Esophagus muscularis mucosa (tissue), 4 donors: ENCODE measurements at regions of chr9 and their contacts with region 1.

Region 1: GRCh38 chr9:6584881-6585597 is 60.5 kb downstream of the GLDC start:
- DNase-seq: no peak
- H3K4me3 ChIP-seq: no peak overlapping the region
- H3K27ac ChIP-seq: no peak overlapping the region
- H3K4me1 ChIP-seq: no peaks in the 10 kb centered on the region
- H3K27me3 ChIP-seq: peaks cover 0 to 8% (median 0%) of the 10 kb centered on the region in 4 donors
- CTCF ChIP-seq: peak; percentile 29 to 53 (median 43)
- EP300 ChIP-seq: no peak
- POLR2A ChIP-seq: no peak

Region 2: GRCh38 chr9:6667633-6668280 is 82.7 kb after region 1 on chr9:
- intact Hi-C with region 1: loop called (anchors 10 kb)
- DNase-seq: no peak
- H3K4me3 ChIP-seq: no peak overlapping the region
- H3K27ac ChIP-seq: no peak overlapping the region
- H3K4me1 ChIP-seq: no peaks in the 10 kb centered on the region
- H3K27me3 ChIP-seq: no peaks in the 10 kb centered on the region
- CTCF ChIP-seq: peak; percentile 27 to 54 (median 39)
- EP300 ChIP-seq: no peak
- POLR2A ChIP-seq: no peak

Region 3: GRCh38 chr9:6739218-6739617 is 154.2 kb after region 1 on chr9:
- intact Hi-C with region 1: loop called (anchors 10 kb)
- DNase-seq: no peak
- H3K4me3 ChIP-seq: no peak overlapping the region
- H3K27ac ChIP-seq: no peak overlapping the region
- H3K4me1 ChIP-seq: no peaks in the 10 kb centered on the region
- H3K27me3 ChIP-seq: no peaks in the 10 kb centered on the region
- CTCF ChIP-seq: peak in 2 of 3 experiments; percentile 11 to 12
- EP300 ChIP-seq: no peak
- POLR2A ChIP-seq: no peak

Region 4: DNA sequence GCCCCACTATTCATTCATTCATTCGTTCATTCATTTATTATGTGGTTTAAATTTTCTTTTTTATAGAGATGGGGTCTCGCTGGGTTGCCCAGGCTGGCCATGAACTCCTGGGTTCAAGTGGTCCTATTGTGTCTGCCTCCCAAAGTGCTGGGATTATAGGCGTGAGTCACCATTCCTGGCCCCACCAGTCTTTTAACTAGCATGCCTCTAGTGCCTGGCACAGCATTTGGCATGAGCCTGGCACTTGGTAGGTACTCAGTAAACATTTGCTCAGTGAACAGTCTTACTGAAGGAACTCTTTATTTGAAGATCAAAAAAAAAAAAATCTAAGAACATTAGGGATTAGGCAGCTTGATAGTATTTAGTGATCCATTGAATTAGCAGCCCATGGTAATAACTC is 270.8 kb after region 1 on chr9:
- intact Hi-C with region 1: no loop called
- DNase-seq: no peak
- H3K4me3 ChIP-seq: no peak overlapping the region
- H3K27ac ChIP-seq: no peak overlapping the region
- H3K4me1 ChIP-seq: peaks cover 0 to 14% (median 7%) of the 10 kb centered on the region in 4 donors
- H3K27me3 ChIP-seq: no peaks in the 10 kb centered on the region
- CTCF ChIP-seq: no peak
- EP300 ChIP-seq: no peak
- POLR2A ChIP-seq: no peak